ENCODE measurements at regions of chr11 and their contacts with region 1.

Region 1: DNA sequence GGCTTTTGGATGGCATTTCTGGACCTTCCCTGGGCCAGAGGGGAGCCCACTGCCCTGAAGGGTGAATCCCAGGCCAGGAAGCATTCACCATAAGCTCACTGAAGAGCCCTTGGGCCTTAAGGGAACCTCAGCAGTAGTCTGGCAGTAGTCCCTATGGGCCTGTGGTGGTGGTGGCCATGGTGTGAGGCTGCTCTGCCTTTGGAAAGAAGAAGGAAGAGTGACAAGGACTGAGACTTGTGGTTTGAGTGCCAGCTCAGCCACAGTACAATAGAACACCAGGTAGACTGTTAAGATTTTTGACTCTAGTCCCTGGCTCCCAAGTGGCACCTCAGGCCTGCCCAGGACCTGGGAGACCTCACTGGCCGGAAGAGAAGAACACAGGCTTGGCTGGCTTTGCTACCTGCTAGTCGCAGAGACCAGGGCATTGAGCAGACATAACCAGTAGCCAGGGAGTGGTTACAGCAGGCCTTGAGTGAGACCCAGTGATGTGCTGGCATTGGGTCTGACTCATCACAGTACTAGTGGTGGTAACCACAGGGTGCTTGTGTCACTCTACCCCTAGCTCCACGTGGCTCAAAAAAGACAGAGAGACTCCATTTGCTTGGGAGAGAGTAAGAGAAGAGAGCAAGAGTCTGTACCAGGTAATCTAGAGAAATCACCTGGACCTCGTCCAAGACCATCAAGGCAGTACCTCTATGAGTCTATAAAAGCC is 259.8 kb upstream of the BLID start:
- DNase-seq: no peak
- H3K4me3 ChIP-seq: no peak overlapping the region
- H3K27ac ChIP-seq: no peak overlapping the region
- H3K27me3 ChIP-seq: no peaks in the 10 kb centered on the region
- CTCF ChIP-seq: no peak

Region 2: DNA sequence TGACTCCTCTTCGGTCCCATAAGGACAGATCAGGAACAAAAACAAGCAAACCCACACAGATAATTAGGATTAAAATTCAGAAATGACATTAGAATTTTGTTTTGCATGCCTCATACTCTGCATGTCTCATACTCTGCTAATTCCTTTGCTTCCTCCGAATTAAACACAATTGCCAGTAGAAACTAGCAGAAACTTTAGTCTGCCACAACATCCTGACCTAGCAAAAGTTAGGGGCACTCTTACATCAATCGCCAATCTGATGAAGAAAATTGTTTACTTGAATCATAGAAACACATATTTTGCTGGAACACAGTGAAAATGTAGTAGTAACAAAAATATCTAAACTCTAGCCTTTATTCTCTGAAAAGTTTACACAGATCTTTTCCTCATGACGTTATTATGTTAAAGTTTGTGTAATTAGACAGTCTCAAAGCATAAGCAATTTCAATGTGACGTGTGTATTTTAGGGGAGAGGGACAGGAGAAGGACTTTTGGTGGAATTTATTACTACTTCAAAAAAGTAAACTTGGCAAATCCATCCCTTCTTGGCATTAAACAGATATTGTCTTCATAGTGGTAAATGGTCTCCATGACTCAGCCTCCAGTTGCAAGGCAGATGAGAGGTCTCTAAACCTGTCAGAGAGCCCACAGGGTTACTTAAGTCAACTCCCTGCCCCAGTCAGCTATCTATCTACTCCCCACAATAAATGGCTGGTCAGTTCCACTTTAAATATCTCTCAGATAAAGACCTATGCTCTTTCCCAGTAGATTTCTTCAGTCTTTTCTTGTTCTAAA is 29.9 kb after region 1 on chr11:
- CTCF ChIA-PET with region 1: interaction called, 10 read pairs
- POLR2A ChIA-PET with region 1: no interaction called
- DNase-seq: peak; percentile 63
- H3K4me3 ChIP-seq: no peak overlapping the region
- H3K27ac ChIP-seq: no peak overlapping the region
- H3K27me3 ChIP-seq: peaks cover 3% of the 10 kb centered on the region
- CTCF ChIP-seq: no peak